Motor neuron (in vitro differentiated cells): ENCODE measurements at regions of chr11 and their contacts with region 1.

Region 1: GRCh38 chr11:94183886-94184264 is 55.2 kb downstream of the PANX1 start:
- ATAC-seq: peak in 3 of 8 experiments; percentile 52 to 79 (median 55)
- H3K4me3 ChIP-seq: no peak overlapping the region
- H3K27ac ChIP-seq: no peak overlapping the region
- H3K4me1 ChIP-seq: no peaks in the 10 kb centered on the region

Region 2: DNA sequence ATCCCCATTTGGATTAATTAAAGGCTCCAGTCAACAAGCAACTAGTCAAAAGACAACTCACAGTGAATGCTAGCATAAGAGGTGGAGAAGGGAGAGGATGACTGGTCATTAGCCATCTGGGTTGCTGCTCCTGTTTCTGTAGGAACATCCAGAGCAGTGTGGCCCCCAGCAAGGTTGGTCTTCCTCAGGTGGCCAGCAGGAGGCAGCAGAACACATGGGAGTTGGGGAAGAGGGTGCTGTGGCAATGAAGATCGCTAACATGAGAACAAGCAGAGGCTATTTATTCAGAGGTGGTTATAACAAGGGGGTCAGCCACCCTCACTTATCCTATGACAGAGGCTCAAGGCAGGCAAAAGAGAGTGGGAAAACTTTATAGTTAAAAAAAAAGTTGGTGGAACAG is 141.8 kb after region 1 on chr11:
- in situ Hi-C with region 1: loop called in 1 of 9 experiments (anchors 10 kb)
- ATAC-seq: peak in 3 of 8 experiments; percentile 57 to 90 (median 83)
- H3K4me3 ChIP-seq: no peak overlapping the region
- H3K27ac ChIP-seq: no peak overlapping the region
- H3K4me1 ChIP-seq: no peaks in the 10 kb centered on the region

Region 3: GRCh38 chr11:94493281-94494125 is 309.6 kb after region 1 on chr11 and contains the starts of genes ANKRD49 and MRE11:
- in situ Hi-C with region 1: loop called in 1 of 9 experiments (anchors 25 kb)
- ATAC-seq: peak; percentile 98 to 100 (median 99)
- H3K4me3 ChIP-seq: peak within 1 kb of the TSS; percentile 81 to 96 (median 85)
- H3K27ac ChIP-seq: peak within 1 kb of the TSS; percentile 40 to 65
- H3K4me1 ChIP-seq: peaks cover 0 to 10% of the 10 kb centered on the region in 2 donors
- total RNA-seq, gene ANKRD49: 12.1 to 21.2 (median 15.5) TPM
- total RNA-seq, gene MRE11: 6.0 to 38.1 (median 10.8) TPM